ENCODE measurements at regions of chr10 and their contacts with region 1.

Region 1: DNA sequence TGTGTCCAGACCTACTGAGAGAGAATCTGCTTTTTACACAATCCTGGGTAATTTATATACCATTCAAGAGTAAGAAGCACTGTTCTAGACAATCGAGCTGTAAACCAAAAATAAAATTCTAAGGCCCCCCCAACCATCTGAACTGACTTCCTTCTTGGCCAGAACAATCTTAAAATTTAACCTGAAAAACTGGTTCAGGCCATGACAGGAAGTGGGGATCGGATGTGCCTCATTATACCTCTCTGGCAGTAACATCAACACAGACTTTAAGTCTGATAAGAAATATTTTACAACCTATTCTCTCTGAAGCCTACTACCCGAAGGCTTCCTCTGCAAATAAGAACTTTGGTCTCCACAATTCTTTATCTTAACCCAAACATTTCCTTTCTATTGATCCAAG is 75.2 kb upstream of the KIF5B start:
- DNase-seq: peak; percentile 70
- H3K4me3 ChIP-seq: no peak overlapping the region
- H3K4me3 Mint-ChIP-seq: peak overlapping the region; percentile 50
- H3K27ac Mint-ChIP-seq: peak overlapping the region; percentile 43
- H3K4me1 ChIP-seq: peaks cover 33% of the 10 kb centered on the region
- H3K4me1 Mint-ChIP-seq: peaks cover 14% of the 10 kb centered on the region
- H3K27me3 ChIP-seq: no peaks in the 10 kb centered on the region
- H3K27me3 Mint-ChIP-seq: no peaks in the 10 kb centered on the region
- CTCF ChIP-seq: no peak

Region 2: DNA sequence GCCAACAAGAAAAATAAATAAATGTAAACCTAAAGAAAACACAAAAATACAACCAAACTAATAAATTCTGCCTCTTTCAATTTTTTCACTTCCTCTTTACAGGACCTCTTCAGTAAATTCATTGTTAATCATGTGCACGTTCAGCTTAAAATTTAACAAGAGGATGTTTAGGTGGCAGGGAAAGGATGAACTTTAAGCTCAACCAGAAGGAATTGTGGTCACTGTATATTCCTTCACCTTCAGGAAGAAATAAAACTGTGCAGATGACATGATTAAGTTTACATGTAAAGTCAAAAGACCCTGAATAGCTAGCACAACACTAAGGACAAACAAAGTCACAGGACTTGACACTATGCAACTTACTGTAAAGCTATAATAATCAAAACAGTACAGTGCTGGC is 108.1 kb before region 1 on chr10:
- CTCF ChIA-PET with region 1: no interaction called
- POLR2A ChIA-PET with region 1: no interaction called
- intact Hi-C with region 1: no loop called
- DNase-seq: no peak
- H3K4me3 ChIP-seq: no peak overlapping the region
- H3K4me3 Mint-ChIP-seq: no peak overlapping the region
- H3K27ac Mint-ChIP-seq: no peak overlapping the region
- H3K4me1 ChIP-seq: no peaks in the 10 kb centered on the region; the same call in 1 of the 2 replicates
- H3K4me1 Mint-ChIP-seq: no peaks in the 10 kb centered on the region
- H3K27me3 ChIP-seq: no peaks in the 10 kb centered on the region
- H3K27me3 Mint-ChIP-seq: no peaks in the 10 kb centered on the region
- CTCF ChIP-seq: no peak

Region 3: DNA sequence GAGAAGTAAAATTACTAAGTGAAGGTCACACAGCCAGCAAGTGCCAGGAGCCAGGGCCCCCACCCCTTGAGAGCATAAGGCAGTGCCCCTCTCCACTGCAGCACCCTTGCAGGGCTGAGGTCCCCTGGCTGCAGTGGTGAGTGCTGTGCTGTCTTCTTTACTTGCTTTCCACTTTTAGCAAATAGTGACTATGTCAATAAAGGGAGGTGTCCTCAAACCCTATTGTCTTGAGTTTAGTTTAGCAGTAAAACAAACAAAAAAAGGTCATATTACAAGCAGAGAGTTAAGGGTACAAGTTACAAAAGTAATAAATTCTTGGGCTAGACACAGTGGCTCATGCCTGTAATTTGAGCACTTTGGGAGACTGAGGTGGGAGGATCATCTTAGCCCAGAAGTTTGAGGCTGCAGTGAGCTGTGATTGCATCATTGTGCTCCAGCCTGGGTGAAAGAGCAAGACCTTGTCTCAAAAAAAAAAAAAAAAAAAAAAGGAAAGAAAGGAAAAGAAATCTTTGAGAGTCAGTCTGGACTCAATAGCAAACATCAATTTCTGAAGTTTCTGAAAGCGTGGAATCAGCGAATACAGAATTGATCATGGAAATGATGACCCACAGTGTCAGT is 36.2 kb before region 1 on chr10:
- CTCF ChIA-PET with region 1: no interaction called
- POLR2A ChIA-PET with region 1: no interaction called
- intact Hi-C with region 1: loop called (anchors 1 kb)
- DNase-seq: peak; percentile 70 to 83
- H3K4me3 ChIP-seq: no peak overlapping the region
- H3K4me3 Mint-ChIP-seq: no peak overlapping the region
- H3K27ac Mint-ChIP-seq: peak overlapping the region; percentile 68
- H3K4me1 ChIP-seq: peaks cover 21% of the 10 kb centered on the region
- H3K4me1 Mint-ChIP-seq: peaks cover 21% of the 10 kb centered on the region
- H3K27me3 ChIP-seq: no peaks in the 10 kb centered on the region
- H3K27me3 Mint-ChIP-seq: no peaks in the 10 kb centered on the region
- CTCF ChIP-seq: peak in 1 of 2 experiments; percentile 36

Region 4: GRCh38 chr10:32104622-32105509 is 26.5 kb before region 1 on chr10:
- CTCF ChIA-PET with region 1: no interaction called
- POLR2A ChIA-PET with region 1: no interaction called
- intact Hi-C with region 1: loop called (anchors 1 kb)
- DNase-seq: no peak
- H3K4me3 ChIP-seq: no peak overlapping the region
- H3K4me3 Mint-ChIP-seq: no peak overlapping the region
- H3K27ac Mint-ChIP-seq: no peak overlapping the region
- H3K4me1 ChIP-seq: peaks cover 27% of the 10 kb centered on the region
- H3K4me1 Mint-ChIP-seq: peaks cover 18% of the 10 kb centered on the region
- H3K27me3 ChIP-seq: no peaks in the 10 kb centered on the region
- H3K27me3 Mint-ChIP-seq: no peaks in the 10 kb centered on the region
- CTCF ChIP-seq: no peak

Region 5: DNA sequence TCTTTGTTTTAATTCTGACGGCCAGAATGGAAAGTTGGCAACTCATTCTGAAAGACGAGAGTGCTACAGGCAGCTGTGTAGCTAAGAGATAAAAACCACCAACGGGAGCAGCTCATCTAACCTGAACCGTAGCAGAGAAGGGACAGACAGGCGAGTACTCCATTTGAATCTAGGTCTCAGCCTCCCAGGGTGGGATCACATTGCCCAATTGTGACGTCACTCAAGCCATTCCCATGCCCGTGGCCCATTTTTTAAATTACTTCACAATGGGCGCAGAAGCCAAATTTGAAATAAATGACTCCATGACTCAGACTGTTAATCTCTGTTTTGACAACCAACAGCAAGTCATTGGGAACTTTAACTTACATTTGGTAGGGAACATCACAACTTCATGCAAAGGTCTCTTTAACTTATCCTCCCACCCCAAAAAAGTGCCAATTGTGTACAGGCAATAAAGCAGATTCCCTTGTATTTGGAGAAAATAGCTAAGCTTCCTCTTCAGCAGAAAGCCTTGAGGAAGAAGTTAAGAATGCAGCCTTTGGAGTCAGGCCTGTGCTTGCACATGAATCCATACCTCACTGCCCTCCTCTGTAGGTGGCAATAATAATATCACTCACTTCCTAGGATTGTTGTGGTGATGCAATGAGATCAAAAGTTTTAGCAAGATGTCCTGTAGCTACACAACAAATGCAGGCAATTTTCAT is 18.0 kb after region 1 on chr10:
- CTCF ChIA-PET with region 1: no interaction called
- POLR2A ChIA-PET with region 1: no interaction called
- intact Hi-C with region 1: loop called (anchors 1 kb)
- DNase-seq: no peak
- H3K4me3 ChIP-seq: no peak overlapping the region
- H3K4me3 Mint-ChIP-seq: no peak overlapping the region
- H3K27ac Mint-ChIP-seq: no peak overlapping the region
- H3K4me1 ChIP-seq: peaks cover 14% of the 10 kb centered on the region
- H3K4me1 Mint-ChIP-seq: peaks cover 32% of the 10 kb centered on the region
- H3K27me3 ChIP-seq: no peaks in the 10 kb centered on the region
- H3K27me3 Mint-ChIP-seq: no peaks in the 10 kb centered on the region
- CTCF ChIP-seq: no peak

Region 6: GRCh38 chr10:32156010-32156495 is 24.7 kb after region 1 on chr10:
- CTCF ChIA-PET with region 1: no interaction called
- POLR2A ChIA-PET with region 1: no interaction called
- intact Hi-C with region 1: loop called (anchors 1 kb)
- DNase-seq: peak; percentile 76 to 79
- H3K4me3 ChIP-seq: no peak overlapping the region
- H3K4me3 Mint-ChIP-seq: peak overlapping the region; percentile 48
- H3K27ac Mint-ChIP-seq: peak overlapping the region; percentile 76
- H3K4me1 ChIP-seq: peaks cover 22% of the 10 kb centered on the region
- H3K4me1 Mint-ChIP-seq: peaks cover 29% of the 10 kb centered on the region
- H3K27me3 ChIP-seq: no peaks in the 10 kb centered on the region
- H3K27me3 Mint-ChIP-seq: no peaks in the 10 kb centered on the region
- CTCF ChIP-seq: no peak

Measured in Caco-2 (cell line).